ENCODE measurements at regions of chr7 and their contacts with region 1.

Region 1: DNA sequence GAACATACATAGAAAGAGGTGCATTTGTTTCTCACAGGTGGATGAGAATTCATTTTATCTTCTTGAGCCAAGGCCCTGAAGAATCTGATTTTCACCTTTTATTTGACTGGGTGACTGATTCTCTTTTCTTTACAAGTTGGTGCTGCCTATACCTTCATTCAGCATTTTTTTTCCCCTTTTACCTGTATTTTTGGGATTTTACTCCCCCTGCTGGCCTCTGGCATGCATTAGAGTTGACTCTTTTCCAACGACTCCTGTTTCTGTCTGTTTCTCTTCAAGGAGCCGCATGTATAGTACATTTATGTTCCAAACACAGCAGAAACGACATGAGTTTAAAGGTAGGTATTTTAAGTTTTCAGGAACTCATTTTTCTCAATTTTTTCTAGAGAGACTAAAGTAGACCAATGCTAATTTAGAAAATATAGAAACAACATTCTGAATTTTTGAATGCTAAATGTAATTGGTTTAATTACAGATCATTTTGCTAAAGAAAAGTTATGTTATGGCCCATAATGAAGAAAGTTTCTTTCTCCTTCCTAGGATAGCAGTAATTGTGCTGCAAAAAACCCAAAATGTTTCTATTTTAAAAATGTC is 149.8 kb upstream of the HDAC9 start:
- DNase-seq: peak in 3 of 9 experiments; percentile 25 to 59 (median 49)
- ATAC-seq: no peak
- H3K4me3 ChIP-seq: no peak overlapping the region
- H3K4me3 Mint-ChIP-seq: no peak overlapping the region
- H3K27ac ChIP-seq: no peak overlapping the region
- H3K27ac Mint-ChIP-seq: no peak overlapping the region
- H3K4me1 ChIP-seq: no peaks in the 10 kb centered on the region
- H3K4me1 Mint-ChIP-seq: no peaks in the 10 kb centered on the region
- H3K27me3 ChIP-seq: no peaks in the 10 kb centered on the region
- H3K27me3 Mint-ChIP-seq: peaks cover 3% of the 10 kb centered on the region
- CTCF ChIP-seq: peak; percentile 82

Region 2: DNA sequence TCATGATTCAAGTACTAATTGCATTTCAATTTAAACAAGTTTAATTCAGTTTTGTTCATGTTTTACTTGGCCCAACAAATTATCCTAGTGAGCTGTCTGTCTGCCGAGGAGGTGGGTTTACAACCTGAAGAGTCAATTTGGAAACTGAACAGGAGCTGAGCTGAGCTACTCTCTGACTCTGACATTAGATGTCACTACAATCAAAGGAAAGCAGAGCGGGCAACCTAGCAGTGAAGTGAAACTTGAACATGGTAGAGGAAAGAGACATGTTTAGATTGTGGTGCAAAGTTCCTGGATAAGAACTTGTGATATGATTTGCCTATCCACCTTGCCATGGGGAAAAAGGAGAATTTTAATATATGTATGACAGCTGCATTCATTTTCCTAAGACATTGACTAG is 1454.4 kb before region 1 on chr7:
- CTCF ChIA-PET with region 1: no interaction called
- POLR2A ChIA-PET with region 1: no interaction called
- intact Hi-C with region 1: loop called (anchors 10 kb)
- DNase-seq: peak in 3 of 9 experiments; percentile 5 to 52 (median 30)
- ATAC-seq: peak; percentile 62
- H3K4me3 ChIP-seq: no peak overlapping the region
- H3K4me3 Mint-ChIP-seq: no peak overlapping the region
- H3K27ac ChIP-seq: no peak overlapping the region
- H3K27ac Mint-ChIP-seq: no peak overlapping the region
- H3K4me1 ChIP-seq: no peaks in the 10 kb centered on the region
- H3K4me1 Mint-ChIP-seq: peaks cover 5% of the 10 kb centered on the region
- H3K27me3 ChIP-seq: no peaks in the 10 kb centered on the region
- H3K27me3 Mint-ChIP-seq: no peaks in the 10 kb centered on the region
- CTCF ChIP-seq: no peak

Region 3: GRCh38 chr7:17680943-17681351 is 664.8 kb before region 1 on chr7:
- CTCF ChIA-PET with region 1: interaction called, 26 read pairs
- POLR2A ChIA-PET with region 1: no interaction called
- intact Hi-C with region 1: loop called (anchors 1 to 2 kb)
- DNase-seq: peak in 2 of 9 experiments; percentile 18 to 36
- ATAC-seq: no peak
- H3K4me3 ChIP-seq: no peak overlapping the region
- H3K4me3 Mint-ChIP-seq: no peak overlapping the region
- H3K27ac ChIP-seq: no peak overlapping the region
- H3K27ac Mint-ChIP-seq: no peak overlapping the region
- H3K4me1 ChIP-seq: no peaks in the 10 kb centered on the region
- H3K4me1 Mint-ChIP-seq: no peaks in the 10 kb centered on the region
- H3K27me3 ChIP-seq: no peaks in the 10 kb centered on the region
- H3K27me3 Mint-ChIP-seq: no peaks in the 10 kb centered on the region
- CTCF ChIP-seq: peak; percentile 75

Region 4: DNA sequence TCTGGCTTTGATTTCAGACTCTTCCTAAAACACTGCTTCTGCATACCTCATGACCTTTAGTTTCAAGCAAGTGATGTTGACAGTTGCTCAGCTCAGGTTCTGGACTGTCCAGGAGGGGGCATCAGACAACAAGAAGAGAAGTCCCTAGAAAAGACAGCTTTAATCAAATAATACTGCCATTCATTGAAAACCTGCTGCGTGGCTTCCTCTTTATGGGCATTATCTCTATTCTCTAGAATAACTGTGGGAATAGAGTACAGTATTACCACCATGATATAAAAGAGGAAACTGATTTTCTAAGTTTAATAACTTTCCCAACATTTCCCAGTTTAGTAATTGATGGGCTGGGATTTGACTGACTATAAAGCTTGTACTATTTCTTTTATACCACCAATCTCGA is 575.8 kb before region 1 on chr7:
- CTCF ChIA-PET with region 1: interaction called, 8 read pairs
- POLR2A ChIA-PET with region 1: no interaction called
- intact Hi-C with region 1: loop called (anchors 1 to 2 kb)
- DNase-seq: peak; percentile 4 to 63 (median 43)
- ATAC-seq: peak; percentile 40
- H3K4me3 ChIP-seq: no peak overlapping the region
- H3K4me3 Mint-ChIP-seq: no peak overlapping the region
- H3K27ac ChIP-seq: no peak overlapping the region
- H3K27ac Mint-ChIP-seq: no peak overlapping the region
- H3K4me1 ChIP-seq: no peaks in the 10 kb centered on the region
- H3K4me1 Mint-ChIP-seq: peaks cover 3% of the 10 kb centered on the region
- H3K27me3 ChIP-seq: no peaks in the 10 kb centered on the region
- H3K27me3 Mint-ChIP-seq: no peaks in the 10 kb centered on the region
- CTCF ChIP-seq: peak; percentile 56

Region 5: DNA sequence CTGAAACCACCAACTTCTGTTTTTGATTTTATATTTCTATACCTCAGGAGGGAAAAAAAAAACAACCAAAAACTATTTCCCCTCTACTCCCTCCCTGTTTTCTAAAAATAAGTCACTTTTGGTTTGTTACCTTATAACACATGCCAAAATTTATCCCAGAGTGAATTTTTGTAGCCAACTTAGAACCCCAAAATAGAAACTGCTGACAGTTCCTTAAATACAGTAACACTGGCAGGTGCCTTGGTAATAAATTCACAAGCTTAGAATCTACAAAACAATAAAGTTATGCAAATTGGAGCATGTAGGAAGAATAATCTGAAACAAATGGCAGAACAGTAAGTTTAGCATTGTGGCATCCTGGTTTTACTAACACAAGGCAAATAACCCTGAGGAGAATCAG is 15.2 kb before region 1 on chr7:
- CTCF ChIA-PET with region 1: no interaction called
- POLR2A ChIA-PET with region 1: no interaction called
- intact Hi-C with region 1: loop called in 1 of 2 experiments (anchors 2 kb)
- DNase-seq: no peak
- ATAC-seq: no peak
- H3K4me3 ChIP-seq: no peak overlapping the region
- H3K4me3 Mint-ChIP-seq: no peak overlapping the region
- H3K27ac ChIP-seq: no peak overlapping the region
- H3K27ac Mint-ChIP-seq: no peak overlapping the region
- H3K4me1 ChIP-seq: no peaks in the 10 kb centered on the region
- H3K4me1 Mint-ChIP-seq: no peaks in the 10 kb centered on the region
- H3K27me3 ChIP-seq: no peaks in the 10 kb centered on the region
- H3K27me3 Mint-ChIP-seq: peaks cover 2% of the 10 kb centered on the region
- CTCF ChIP-seq: no peak

Region 6: GRCh38 chr7:18753972-18754610 is 408.4 kb after region 1 on chr7:
- CTCF ChIA-PET with region 1: no interaction called
- POLR2A ChIA-PET with region 1: no interaction called
- intact Hi-C with region 1: no loop called
- DNase-seq: no peak
- ATAC-seq: no peak
- H3K4me3 ChIP-seq: no peak overlapping the region
- H3K4me3 Mint-ChIP-seq: no peak overlapping the region
- H3K27ac ChIP-seq: no peak overlapping the region
- H3K27ac Mint-ChIP-seq: no peak overlapping the region
- H3K4me1 ChIP-seq: no peaks in the 10 kb centered on the region
- H3K4me1 Mint-ChIP-seq: no peaks in the 10 kb centered on the region
- H3K27me3 ChIP-seq: no peaks in the 10 kb centered on the region
- H3K27me3 Mint-ChIP-seq: no peaks in the 10 kb centered on the region
- CTCF ChIP-seq: no peak

Measured in CD8-positive, alpha-beta T cell (primary cell).